CD8-positive, alpha-beta T cell (primary cell): ENCODE measurements at regions of chr16 and their contacts with region 1.

Region 1: GRCh38 chr16:67055712-67056487 is 27.0 kb downstream of the CBFB start:
- DNase-seq: no peak
- ATAC-seq: no peak
- H3K4me3 ChIP-seq: no peak overlapping the region
- H3K4me3 Mint-ChIP-seq: no peak overlapping the region
- H3K27ac ChIP-seq: no peak overlapping the region
- H3K27ac Mint-ChIP-seq: peak overlapping the region; percentile 30
- H3K4me1 ChIP-seq: peaks cover 24% of the 10 kb centered on the region
- H3K4me1 Mint-ChIP-seq: peaks cover 45% of the 10 kb centered on the region
- H3K27me3 ChIP-seq: no peaks in the 10 kb centered on the region
- H3K27me3 Mint-ChIP-seq: no peaks in the 10 kb centered on the region
- CTCF ChIP-seq: no peak

Region 2: DNA sequence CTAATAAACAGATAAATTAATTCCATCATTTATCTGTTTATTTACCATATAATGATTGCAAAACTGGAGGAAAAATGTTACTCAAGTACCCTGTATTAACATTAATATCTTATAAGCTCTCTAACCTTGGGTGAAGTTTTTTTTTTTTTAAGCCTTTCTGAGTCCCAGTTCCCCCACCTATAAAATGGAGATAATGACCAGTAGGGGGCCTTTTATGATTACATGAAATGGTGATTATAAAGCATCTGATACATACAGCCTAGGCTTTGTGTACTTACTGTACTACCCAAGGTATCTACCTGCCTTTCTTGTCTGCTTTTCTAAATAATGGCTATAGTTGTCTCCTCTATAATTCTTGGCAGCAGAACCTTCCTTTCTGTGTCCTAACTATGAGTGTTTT is 293.3 kb after region 1 on chr16:
- CTCF ChIA-PET with region 1: no interaction called
- POLR2A ChIA-PET with region 1: interaction called, 10 read pairs
- intact Hi-C with region 1: no loop called
- DNase-seq: peak in 2 of 9 experiments; percentile 33 to 50
- ATAC-seq: no peak
- H3K4me3 ChIP-seq: no peak overlapping the region
- H3K4me3 Mint-ChIP-seq: no peak overlapping the region
- H3K27ac ChIP-seq: no peak overlapping the region
- H3K27ac Mint-ChIP-seq: no peak overlapping the region
- H3K4me1 ChIP-seq: no peaks in the 10 kb centered on the region
- H3K4me1 Mint-ChIP-seq: no peaks in the 10 kb centered on the region
- H3K27me3 ChIP-seq: no peaks in the 10 kb centered on the region
- H3K27me3 Mint-ChIP-seq: no peaks in the 10 kb centered on the region
- CTCF ChIP-seq: peak; percentile 38